ENCODE measurements at regions of chr6 and their contacts with region 1.

Region 1: DNA sequence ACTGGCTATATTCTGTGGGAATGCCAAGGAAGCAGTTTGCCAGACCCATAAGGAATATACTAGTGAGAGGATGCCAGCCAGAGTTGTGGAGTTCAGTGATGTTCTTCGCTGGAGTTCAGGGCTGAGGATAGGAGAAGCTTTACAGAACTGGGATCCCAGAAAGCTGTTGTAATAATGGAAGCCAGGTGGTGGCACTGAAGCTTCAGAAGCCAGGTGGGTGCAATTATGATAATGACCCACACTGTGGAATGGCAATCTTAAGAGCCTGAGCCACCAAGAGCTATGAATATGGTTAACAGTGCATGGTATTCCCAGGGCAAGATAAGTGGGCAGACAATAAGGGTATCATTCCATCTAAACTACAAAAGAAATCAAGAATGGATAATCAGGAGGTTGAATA is 25.1 kb upstream of the ENPP1 start:
- DNase-seq: no peak
- H3K4me3 ChIP-seq: no peak overlapping the region
- H3K27ac ChIP-seq: no peak overlapping the region
- H3K4me1 ChIP-seq: peaks cover 2 to 8% of the 10 kb centered on the region in 2 donors
- H3K27me3 ChIP-seq: no peaks in the 10 kb centered on the region
- CTCF ChIP-seq: no peak

Region 2: GRCh38 chr6:131761060-131761761 is 21.6 kb before region 1 on chr6:
- intact Hi-C with region 1: loop called (anchors 2 kb)
- DNase-seq: no peak
- H3K4me3 ChIP-seq: no peak overlapping the region
- H3K27ac ChIP-seq: peak overlapping the region; percentile 49 to 56
- H3K4me1 ChIP-seq: peaks cover 6 to 34% of the 10 kb centered on the region in 2 donors
- H3K27me3 ChIP-seq: no peaks in the 10 kb centered on the region
- CTCF ChIP-seq: no peak

Region 3: DNA sequence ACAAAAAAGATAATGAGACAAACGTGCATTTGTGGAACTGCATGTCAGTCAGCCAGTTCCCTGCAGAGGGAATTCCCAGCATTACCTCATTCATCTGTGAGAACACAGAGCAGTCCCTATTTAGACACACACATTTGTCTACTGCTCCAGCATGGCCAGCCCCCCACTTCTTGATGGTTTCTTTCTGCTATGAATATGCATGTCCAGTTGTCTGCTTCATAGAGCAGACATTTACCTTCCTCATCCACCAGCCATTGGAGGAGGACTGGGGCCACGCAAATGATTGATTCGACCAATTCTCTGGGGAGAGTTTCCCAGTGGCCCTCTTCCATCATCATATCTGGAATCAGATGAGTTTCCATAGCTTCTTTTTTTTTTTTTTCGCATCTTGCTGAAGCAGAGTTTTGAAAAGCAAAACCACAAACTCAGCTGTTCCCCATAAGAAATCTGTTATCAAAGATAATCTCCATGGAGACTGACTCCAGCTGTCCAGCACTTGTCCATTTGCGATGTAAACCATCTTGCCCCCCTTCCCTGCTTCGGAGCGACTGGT is 36.9 kb after region 1 on chr6:
- intact Hi-C with region 1: no loop called
- DNase-seq: no peak
- H3K4me3 ChIP-seq: no peak overlapping the region
- H3K27ac ChIP-seq: no peak overlapping the region
- H3K4me1 ChIP-seq: no peaks in the 10 kb centered on the region
- H3K27me3 ChIP-seq: no peaks in the 10 kb centered on the region
- CTCF ChIP-seq: no peak

Region 4: DNA sequence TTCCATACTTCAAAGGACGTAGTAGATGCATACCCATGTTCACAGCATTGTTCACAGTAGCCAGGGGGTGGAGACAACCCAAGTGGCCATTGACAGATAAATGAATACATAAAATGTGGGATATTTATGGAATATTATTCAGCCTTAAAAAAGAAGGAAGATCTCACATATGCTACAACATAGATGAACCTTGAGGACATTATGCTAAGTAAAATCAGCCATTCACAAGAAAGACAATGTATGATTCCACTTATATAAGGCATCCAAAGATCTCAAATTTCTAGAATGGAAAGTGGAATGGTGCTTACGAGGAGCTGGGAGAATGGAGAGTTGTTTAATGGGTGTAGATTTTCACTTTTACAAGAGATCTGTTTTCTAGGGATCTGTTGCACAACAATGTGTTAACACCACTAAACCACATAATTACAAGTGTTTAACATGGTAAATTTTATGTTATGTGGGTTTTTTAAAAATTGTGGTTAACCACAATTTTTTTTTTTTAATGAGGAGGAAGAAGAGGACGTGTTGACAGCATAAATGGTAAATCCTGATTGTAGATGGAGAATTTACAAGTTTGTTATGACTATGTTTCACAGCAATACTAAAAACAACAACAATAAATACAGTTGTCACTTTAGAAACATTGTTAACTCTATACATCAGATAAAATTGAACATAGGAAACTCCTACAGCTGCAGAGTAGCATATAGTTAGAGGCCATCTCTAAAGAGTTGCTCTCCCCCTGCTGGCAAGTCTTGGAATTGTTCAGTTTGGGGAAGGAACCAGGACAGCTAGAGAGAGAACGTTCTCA is 126.8 kb after region 1 on chr6:
- intact Hi-C with region 1: loop called (anchors 5 kb)
- DNase-seq: peak in 1 of 2 donors; percentile 83
- H3K4me3 ChIP-seq: no peak overlapping the region
- H3K27ac ChIP-seq: no peak overlapping the region
- H3K4me1 ChIP-seq: no peaks in the 10 kb centered on the region
- H3K27me3 ChIP-seq: no peaks in the 10 kb centered on the region
- CTCF ChIP-seq: peak; percentile 66 to 89 (median 88)

Region 5: DNA sequence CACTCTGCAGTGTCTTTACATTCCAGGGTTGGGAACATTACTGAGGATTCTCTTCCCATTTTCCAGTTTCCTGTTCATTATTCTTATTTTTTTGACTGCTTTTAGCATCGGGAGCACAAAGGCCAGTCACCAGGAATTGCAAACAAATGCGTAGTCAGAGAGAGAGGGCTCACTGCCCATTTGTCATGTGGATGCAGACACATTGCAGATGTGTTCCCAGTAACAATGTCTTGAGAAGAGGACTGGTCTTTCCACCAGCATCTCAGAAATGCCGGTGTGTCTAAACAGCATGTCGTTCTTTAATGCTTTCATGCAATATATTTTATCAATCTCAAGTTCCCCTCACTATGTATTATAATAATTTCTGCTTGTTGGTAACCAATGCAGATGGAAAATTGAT is 786.4 kb after region 1 on chr6:
- intact Hi-C with region 1: no loop called
- DNase-seq: no peak
- H3K4me3 ChIP-seq: no peak overlapping the region
- H3K27ac ChIP-seq: no peak overlapping the region
- H3K4me1 ChIP-seq: no peaks in the 10 kb centered on the region
- H3K27me3 ChIP-seq: no peaks in the 10 kb centered on the region
- CTCF ChIP-seq: no peak